ENCODE measurements at regions of chr7 and their contacts with region 1.

Region 1: GRCh38 chr7:107711301-107711700 is 32.6 kb upstream of the CBLL1 start:
- DNase-seq: peak; percentile 10
- H3K4me3 ChIP-seq: no peak overlapping the region
- H3K27ac ChIP-seq: no peak overlapping the region
- H3K4me1 ChIP-seq: no peaks in the 10 kb centered on the region
- H3K27me3 ChIP-seq: no peaks in the 10 kb centered on the region
- CTCF ChIP-seq: no peak
- EP300 ChIP-seq: no peak
- POLR2A ChIP-seq: no peak

Region 2: GRCh38 chr7:106659963-106660861 is 1051.1 kb before region 1 on chr7:
- intact Hi-C with region 1: no loop called
- DNase-seq: no peak
- H3K4me3 ChIP-seq: peak overlapping the region; percentile 65 to 94 (median 88)
- H3K27ac ChIP-seq: peak overlapping the region; percentile 96 to 99 (median 96)
- H3K4me1 ChIP-seq: peaks cover 14 to 32% (median 27%) of the 10 kb centered on the region in 4 donors
- H3K27me3 ChIP-seq: no peaks in the 10 kb centered on the region
- CTCF ChIP-seq: peak; percentile 46 to 90 (median 68)
- EP300 ChIP-seq: no peak
- POLR2A ChIP-seq: no peak

Region 3: DNA sequence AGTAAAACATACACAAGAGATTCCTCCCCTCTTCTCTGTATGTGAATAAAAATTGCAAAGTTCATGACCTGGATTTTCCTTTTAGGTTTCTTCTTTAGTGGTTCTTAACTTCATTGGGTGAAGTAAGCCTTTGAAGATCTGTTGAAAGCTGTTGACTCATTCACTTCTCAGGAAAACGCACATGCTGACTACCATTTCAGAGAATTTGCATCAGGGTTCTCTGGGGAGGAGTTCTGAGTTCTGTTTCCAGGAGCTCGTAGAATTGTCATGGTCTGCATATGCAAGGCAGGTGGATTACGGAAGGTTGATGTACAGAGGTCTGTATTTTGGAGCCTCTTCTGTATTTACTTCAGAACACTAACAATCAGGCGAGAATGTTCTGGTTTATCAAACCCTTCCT is 51.6 kb before region 1 on chr7:
- intact Hi-C with region 1: loop called (anchors 10 kb)
- DNase-seq: no peak
- H3K4me3 ChIP-seq: no peak overlapping the region
- H3K27ac ChIP-seq: no peak overlapping the region
- H3K4me1 ChIP-seq: peaks cover 14 to 20% (median 18%) of the 10 kb centered on the region in 4 donors
- H3K27me3 ChIP-seq: peaks cover 0 to 42% (median 22%) of the 10 kb centered on the region in 4 donors
- CTCF ChIP-seq: no peak
- EP300 ChIP-seq: no peak
- POLR2A ChIP-seq: no peak